ENCODE measurements at regions of chr2 and their contacts with region 1.

Region 1: DNA sequence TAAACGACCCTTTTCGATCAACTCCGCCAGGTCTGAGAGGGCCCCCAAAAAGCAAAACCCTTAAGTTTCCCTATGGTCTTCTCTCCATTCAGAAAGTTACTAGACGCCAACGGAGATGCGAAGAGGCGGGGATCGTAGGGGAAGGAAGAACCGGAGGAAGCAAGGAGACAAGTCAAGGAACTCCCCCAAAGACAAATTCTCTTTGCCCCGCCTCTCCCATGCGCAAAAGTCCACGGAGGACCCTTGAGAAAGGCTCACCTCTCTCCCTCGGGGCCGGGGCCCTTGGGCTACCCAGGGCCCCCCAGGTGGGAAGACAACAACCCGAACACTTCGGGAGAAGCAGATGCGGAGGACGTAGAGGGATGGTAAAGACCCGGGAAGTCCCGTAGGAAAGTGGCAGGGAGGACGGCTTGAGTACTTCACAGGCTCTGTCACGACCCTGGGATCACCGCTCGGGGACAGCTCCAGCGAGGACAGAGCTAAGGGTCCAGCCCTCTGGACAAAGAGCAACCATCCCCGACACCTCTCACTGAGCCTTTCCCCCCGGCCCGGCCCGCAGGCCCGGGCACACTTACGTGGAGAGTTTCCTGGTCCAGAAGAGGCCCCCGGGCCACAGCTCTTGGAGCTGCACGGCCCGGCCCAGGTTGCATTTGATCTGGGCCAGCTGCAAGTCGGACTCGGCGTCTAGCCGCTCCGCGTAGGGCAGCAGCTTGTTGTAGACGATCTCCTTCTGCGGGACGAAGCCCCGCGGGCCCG is 647 bp downstream of the PSME4 start:
- DNase-seq: no peak
- H3K4me3 ChIP-seq: peak overlapping the region; percentile 52 to 95 (median 84)
- H3K27ac ChIP-seq: peak overlapping the region; percentile 93 to 97 (median 95)
- H3K4me1 ChIP-seq: peaks cover 25 to 72% (median 46%) of the 10 kb centered on the region in 6 donors
- H3K27me3 ChIP-seq: no peaks in the 10 kb centered on the region
- CTCF ChIP-seq: no peak
- POLR2A ChIP-seq: no peak

Region 2: DNA sequence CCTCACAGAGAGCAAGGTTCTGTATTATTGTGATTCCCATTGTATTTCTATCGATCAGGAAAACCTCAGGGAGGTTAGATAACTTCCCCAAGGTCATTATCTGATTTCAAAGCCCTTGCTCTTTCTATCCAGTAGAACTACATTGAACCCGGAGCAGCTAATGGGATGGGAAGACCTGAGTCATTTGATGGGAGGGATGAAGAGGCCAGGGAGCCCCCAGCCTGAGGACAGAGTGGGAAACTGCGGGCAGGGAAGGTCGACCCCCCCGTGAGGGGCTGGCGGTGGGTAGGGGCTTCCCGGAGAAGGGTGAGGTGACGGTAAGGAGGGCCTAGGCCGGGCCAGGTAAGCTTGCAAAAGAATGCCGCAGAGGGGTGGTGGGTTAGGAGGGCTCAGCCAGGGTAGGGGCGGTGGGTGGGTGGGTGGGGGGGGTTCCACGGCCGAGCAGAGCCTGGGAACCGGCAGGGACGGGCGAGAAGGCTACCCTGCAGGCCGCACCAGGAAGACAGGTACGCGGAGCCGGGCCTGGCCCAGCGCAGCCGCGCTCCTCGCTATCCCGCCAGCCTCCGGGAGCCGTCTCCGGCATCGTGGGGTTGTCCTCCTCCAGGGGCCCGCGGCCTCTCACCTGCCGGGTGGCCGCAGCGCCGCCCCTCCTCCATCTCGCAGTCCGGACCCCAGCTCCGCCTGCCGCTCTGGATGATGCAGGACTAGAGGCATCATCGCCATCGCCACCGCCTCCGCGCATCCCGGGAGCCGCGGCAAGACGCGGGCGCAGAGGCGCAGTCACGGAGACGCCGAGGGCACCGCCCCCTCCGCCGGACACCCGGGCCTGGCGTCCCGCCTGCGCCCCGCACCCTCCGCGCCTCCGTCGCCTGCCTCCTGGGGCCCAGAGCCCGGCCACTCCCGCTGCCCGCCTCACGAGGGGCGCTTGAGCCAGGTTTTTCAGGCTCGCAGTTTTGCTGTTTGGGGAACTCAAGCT is 110.7 kb before region 1 on chr2 and contains the start of gene GPR75:
- intact Hi-C with region 1: no loop called
- DNase-seq: peak; percentile 73
- H3K4me3 ChIP-seq: peak within 1 kb of the TSS in 3 of 8 donors; percentile 5 to 39 (median 13)
- H3K27ac ChIP-seq: no peak within 1 kb of the TSS
- H3K4me1 ChIP-seq: peaks cover 0 to 6% (median 0%) of the 10 kb centered on the region in 6 donors
- H3K27me3 ChIP-seq: no peaks in the 10 kb centered on the region
- CTCF ChIP-seq: no peak
- POLR2A ChIP-seq: no peak
- total RNA-seq, gene GPR75: 3.0 to 10.9 (median 4.5) TPM

Region 3: GRCh38 chr2:54029721-54030395 is 59.7 kb after region 1 on chr2:
- intact Hi-C with region 1: no loop called
- DNase-seq: no peak
- H3K4me3 ChIP-seq: no peak overlapping the region
- H3K27ac ChIP-seq: peak overlapping the region in 6 of 8 donors; percentile 15 to 54 (median 34)
- H3K4me1 ChIP-seq: peaks cover 0 to 6% (median 0%) of the 10 kb centered on the region in 6 donors
- H3K27me3 ChIP-seq: no peaks in the 10 kb centered on the region
- CTCF ChIP-seq: no peak
- POLR2A ChIP-seq: no peak

Region 4: GRCh38 chr2:54092940-54093339 is 122.8 kb after region 1 on chr2:
- intact Hi-C with region 1: loop called (anchors 10 kb)
- DNase-seq: no peak
- H3K4me3 ChIP-seq: peak overlapping the region in 1 of 8 donors; percentile 14
- H3K27ac ChIP-seq: peak overlapping the region in 7 of 8 donors; percentile 51 to 82 (median 66)
- H3K4me1 ChIP-seq: peaks cover 7 to 33% (median 18%) of the 10 kb centered on the region in 6 donors
- H3K27me3 ChIP-seq: no peaks in the 10 kb centered on the region
- CTCF ChIP-seq: no peak
- POLR2A ChIP-seq: no peak

Measured in spleen (tissue), 13 donors.